Activated CD8-positive, alpha-beta memory T cell treated with anti-CD3 and anti-CD28 coated beads, Interleukin-2, amount 10 ng/mL, durations not matched to agents 7 days and 5 days (primary cell): ENCODE measurements at regions of chr11 and their contacts with region 1.

Region 1: GRCh38 chr11:47407746-47408590 is at the start of gene SLC39A13:
- DNase-seq: peak; percentile 93
- ATAC-seq: peak; percentile 89
- H3K4me3 Mint-ChIP-seq: peak within 1 kb of the TSS; percentile 80
- H3K27ac Mint-ChIP-seq: peak within 1 kb of the TSS; percentile 87
- H3K4me1 Mint-ChIP-seq: peaks cover 19% of the 10 kb centered on the region
- H3K27me3 Mint-ChIP-seq: no peaks in the 10 kb centered on the region
- total RNA-seq, gene SLC39A13: 18.2 to 22.1 TPM

Region 2: DNA sequence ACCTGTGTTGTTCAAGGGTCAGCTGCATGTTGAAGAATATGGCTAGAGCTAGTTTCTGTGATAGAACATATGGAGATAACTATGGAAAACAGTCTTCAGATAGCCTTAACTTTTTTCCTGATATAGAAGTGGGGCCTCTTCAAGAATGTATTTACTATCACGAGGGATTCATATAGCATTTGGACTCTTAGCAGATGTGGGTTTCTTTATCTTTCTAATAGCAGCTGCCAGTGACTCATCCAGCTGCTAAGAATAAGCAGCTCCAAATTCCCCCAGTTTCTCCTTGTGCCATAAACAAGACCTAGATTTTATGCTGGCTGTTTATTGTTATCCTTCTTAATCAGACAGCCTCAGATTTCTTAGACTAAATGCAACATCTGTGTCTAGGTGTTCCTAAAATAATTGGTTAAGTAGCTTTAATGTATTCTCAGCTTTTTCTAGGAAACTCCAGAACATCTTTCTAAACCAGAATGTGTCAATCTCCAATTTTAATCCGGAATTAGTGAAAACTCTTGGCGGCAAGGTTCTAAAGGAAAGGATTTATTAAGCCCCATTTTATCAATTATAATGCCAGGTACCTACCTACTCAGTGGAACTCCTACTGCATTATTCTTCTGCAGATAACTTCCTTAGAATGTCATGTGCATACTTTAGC is 351.6 kb before region 1 on chr11:
- CTCF ChIA-PET with region 1: no interaction called
- DNase-seq: no peak
- ATAC-seq: no peak
- H3K4me3 Mint-ChIP-seq: no peak overlapping the region
- H3K27ac Mint-ChIP-seq: no peak overlapping the region
- H3K4me1 Mint-ChIP-seq: peaks cover 11% of the 10 kb centered on the region
- H3K27me3 Mint-ChIP-seq: no peaks in the 10 kb centered on the region

Region 3: GRCh38 chr11:47248664-47249377 is 159.1 kb before region 1 on chr11 and contains the start of gene ACP2:
- CTCF ChIA-PET with region 1: interaction called, 14 read pairs
- DNase-seq: peak; percentile 93
- ATAC-seq: peak; percentile 98
- H3K4me3 Mint-ChIP-seq: peak within 1 kb of the TSS; percentile 89
- H3K27ac Mint-ChIP-seq: peak within 1 kb of the TSS; percentile 94
- H3K4me1 Mint-ChIP-seq: peaks cover 29% of the 10 kb centered on the region
- H3K27me3 Mint-ChIP-seq: no peaks in the 10 kb centered on the region
- total RNA-seq, gene ACP2: 26.0 to 29.7 TPM

Region 4: DNA sequence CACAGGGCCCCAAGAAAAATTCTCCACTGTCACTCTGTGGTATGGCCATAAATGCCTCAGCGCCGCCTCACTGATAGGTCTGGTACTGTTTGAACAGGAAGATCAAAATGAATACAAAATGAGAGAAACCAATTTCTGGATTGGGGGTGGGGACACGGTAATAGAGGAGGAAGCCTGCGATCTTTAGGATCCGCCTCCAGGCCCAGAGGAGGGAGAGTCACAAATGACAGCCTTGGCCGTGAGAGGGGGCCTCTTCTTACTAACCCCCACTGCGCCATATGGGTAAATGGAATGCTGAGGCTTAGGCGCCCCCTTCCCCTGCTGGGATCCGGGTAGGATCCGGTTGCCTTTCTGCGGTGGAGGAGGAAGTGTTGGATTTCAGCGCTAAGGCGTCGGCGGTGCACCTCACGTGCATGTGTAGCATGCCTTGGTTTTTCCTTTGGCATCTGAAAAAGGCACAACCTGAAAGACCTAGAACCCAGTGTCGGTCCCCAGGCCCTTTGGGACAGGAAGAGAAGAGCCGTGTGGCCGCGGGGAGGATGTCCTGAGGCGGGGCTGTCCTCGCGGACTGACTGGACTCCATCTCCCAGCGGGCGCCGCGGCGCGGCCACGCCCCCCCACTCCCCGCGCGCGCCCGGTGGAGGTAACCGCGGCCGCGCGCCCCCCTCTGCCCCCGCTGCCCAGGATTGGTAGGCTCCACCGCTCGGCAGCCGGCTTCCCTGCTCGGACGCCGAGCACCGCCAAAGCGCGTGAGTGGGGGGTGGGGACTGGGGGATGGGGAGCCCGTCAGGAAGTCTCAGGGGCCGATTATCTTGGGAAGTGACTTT is 138.8 kb before region 1 on chr11:
- CTCF ChIA-PET with region 1: interaction called, 10 read pairs
- DNase-seq: peak; percentile 90
- ATAC-seq: peak; percentile 64
- H3K4me3 Mint-ChIP-seq: peak overlapping the region; percentile 78
- H3K27ac Mint-ChIP-seq: peak overlapping the region; percentile 98
- H3K4me1 Mint-ChIP-seq: peaks cover 62% of the 10 kb centered on the region
- H3K27me3 Mint-ChIP-seq: no peaks in the 10 kb centered on the region

Region 5: DNA sequence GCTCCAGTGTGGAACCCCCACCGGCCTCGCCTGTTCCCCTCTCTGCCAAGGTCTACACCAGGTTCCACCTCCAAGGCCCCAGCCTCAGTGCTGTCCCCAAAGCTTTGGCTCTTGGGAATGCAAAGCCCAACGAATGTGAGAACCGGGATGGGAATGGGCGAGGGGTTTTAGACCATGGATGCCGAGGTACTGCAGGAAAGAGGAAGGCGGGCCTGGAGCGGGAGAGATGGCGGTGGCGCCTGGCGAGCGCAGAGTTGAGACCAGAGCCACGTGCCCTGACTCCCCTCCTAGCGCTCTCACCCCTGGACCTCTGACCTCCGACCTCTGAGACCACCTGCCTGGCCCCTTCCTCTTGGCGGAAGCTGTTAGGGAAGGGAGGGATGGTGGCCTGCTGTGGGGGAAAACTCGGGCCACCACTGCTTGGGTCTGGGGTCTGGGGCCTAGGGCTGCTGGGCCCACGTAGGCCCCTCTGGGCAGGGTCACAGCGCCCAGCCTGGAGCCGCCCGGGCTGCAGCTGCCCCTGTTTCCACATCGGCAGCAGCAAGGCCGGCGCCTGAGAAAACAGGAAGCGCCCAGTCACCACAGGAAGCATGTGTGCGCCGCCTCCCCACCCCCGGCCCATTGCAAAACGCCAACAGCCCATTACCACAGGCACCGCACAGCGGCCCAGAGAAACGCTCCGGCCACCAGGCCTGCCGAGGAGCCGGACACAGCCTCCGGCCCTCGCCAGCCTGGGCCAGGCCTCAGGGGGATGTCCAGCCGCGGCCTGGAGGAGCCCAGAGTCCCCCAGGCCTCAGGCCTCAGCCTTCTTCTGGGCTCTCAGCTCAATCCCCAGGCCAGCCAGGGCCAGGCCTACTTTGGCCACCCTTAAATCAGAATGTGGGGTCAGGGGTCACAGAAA is 13.4 kb before region 1 on chr11:
- CTCF ChIA-PET with region 1: interaction called, 90 read pairs
- DNase-seq: peak; percentile 78
- ATAC-seq: peak; percentile 86
- H3K4me3 Mint-ChIP-seq: no peak overlapping the region
- H3K27ac Mint-ChIP-seq: peak overlapping the region; percentile 86
- H3K4me1 Mint-ChIP-seq: peaks cover 29% of the 10 kb centered on the region
- H3K27me3 Mint-ChIP-seq: no peaks in the 10 kb centered on the region

Region 6: GRCh38 chr11:47426061-47426956 is 18.3 kb after region 1 on chr11 and contains the start of gene PSMC3:
- CTCF ChIA-PET with region 1: interaction called, 78 read pairs
- DNase-seq: peak; percentile 99
- ATAC-seq: peak; percentile 97
- H3K4me3 Mint-ChIP-seq: peak within 1 kb of the TSS; percentile 100
- H3K27ac Mint-ChIP-seq: peak within 1 kb of the TSS; percentile 100
- H3K4me1 Mint-ChIP-seq: peaks cover 31% of the 10 kb centered on the region
- H3K27me3 Mint-ChIP-seq: no peaks in the 10 kb centered on the region
- total RNA-seq, gene PSMC3: 150 to 164 TPM